Right ventricle myocardium inferior (tissue), 1 donor: ENCODE measurements at regions of chr18 and their contacts with region 1.

Region 1: GRCh38 chr18:50429207-50429948 is 54.5 kb downstream of the SKA1 start:
- DNase-seq: no peak
- ATAC-seq: no peak

Region 2: GRCh38 chr18:50051288-50051687 is 378.1 kb before region 1 on chr18:
- intact Hi-C with region 1: no loop called
- DNase-seq: no peak
- ATAC-seq: no peak

Region 3: GRCh38 chr18:50218432-50219197 is 210.8 kb before region 1 on chr18:
- intact Hi-C with region 1: loop called (anchors 2 kb)
- DNase-seq: no peak
- ATAC-seq: no peak

Region 4: DNA sequence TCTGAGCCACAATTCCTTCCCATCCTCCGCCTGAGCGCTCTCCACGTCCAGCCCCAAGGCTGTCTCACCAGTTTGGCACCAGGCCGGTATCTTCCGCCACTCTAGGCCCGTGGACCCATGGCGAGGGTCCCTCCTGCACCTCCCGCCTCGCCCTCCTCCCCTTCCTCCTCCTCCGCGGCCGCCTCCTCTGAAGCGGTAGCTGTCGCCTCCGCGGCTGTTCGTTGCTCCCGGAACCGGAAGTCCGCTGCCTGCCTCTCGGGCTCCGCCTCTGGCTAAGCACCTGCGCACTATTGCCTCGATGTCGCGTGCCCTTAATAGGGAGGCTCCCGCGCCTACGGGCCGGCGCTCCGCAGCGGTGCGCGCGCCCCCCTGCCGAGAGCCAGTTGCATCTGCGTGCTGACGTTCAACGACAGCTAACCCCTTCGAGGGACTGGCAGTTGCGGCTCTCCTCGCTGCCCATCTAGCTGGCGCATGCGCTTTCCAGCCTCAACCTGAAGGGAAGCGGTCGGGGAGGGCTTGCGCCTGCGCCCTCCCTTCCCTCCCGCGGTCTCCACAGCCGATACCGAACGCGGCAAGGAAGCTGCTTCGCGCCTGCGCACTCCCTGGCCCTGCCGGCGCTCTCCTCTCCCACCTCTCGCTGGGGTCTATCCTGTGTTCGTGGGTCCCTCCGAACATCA is 147.9 kb before region 1 on chr18 and contains the start of gene MBD1:
- intact Hi-C with region 1: loop called (anchors 5 kb)
- DNase-seq: peak; percentile 99
- ATAC-seq: peak; percentile 97
- total RNA-seq, gene MBD1: 49.4 TPM

Region 5: DNA sequence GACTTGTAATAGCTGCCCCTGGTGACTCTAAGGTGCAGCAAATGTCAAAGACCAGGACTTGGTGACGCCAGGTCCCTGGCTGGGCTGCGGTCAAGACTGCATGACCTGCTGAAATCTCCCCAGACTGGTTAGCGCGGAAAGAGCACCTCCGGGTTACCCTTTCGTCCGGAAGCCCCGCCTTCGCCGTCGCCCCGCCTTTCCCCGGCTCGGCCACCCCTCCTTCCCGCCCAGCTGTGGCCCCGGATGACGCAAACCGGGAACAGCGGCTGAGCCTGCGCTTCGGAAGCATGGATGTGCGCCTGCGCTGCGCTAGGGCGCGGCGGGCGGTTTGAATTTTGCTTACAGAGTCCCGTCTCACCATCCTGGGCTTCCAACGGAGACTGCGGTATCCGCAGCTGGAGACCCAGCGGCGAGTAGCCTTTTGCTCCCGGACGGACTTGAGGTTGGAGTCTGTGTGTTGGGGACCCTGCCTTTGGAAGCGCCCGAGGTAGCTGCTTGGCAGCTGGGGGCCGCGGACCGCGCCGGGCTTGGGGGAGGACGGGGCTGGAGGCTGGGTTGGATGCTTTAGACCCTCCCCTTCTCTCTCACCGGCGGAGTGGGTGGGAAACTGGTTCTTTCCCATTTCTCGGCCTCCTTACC is 54.5 kb before region 1 on chr18 and contains the start of gene SKA1:
- intact Hi-C with region 1: loop called (anchors 5 kb)
- DNase-seq: peak; percentile 97
- ATAC-seq: peak; percentile 100
- total RNA-seq, gene SKA1: 0.38 TPM